ENCODE measurements at regions of chr10 and their contacts with region 1.

Region 1: DNA sequence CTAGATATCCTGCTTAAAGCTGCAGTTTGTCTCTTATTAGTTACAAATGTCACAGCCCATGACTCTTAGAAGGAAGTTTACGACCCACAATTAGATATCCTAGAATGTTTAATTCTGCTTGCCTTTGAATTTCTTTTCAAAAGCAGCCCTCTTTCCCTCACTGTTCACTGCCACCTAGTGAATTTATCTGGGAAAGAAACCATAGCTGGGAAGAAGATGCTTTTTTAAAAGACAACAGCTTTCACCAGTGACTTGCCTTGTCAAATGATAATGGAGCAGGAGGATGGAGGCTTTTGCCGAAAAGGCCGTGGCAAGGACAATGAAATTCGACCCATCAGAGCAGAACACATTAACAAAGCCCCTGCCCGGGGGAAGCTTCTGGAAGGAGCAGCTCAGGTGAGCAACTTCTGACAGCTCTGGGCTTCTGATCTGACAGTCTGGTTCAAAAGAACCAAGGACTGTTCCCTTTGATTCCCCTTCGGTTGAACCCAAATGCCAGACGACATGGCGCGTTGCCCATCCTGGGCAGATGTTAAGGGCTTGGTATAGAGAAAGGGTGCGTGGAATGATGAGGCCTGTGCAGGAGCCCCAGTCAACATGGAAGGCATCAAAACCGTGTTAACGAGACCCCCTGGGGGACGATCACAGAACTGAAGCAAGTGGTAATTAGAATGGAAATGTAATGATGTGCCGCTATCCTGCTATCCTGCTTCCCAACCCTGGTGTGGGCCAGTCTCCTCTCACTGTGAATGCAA is 236.8 kb downstream of the FRMD4A start:
- DNase-seq: no peak
- ATAC-seq: no peak
- H3K4me3 ChIP-seq: no peak overlapping the region
- H3K27ac ChIP-seq: no peak overlapping the region
- H3K4me1 ChIP-seq: no peaks in the 10 kb centered on the region
- H3K27me3 ChIP-seq: no peaks in the 10 kb centered on the region
- CTCF ChIP-seq: peak in 4 of 5 experiments; percentile 24 to 42 (median 32)
- POLR2A ChIP-seq: no peak

Region 2: GRCh38 chr10:13787015-13787421 is 306.9 kb before region 1 on chr10:
- in situ Hi-C with region 1: loop called (anchors 5 to 25 kb)
- intact Hi-C with region 1: loop called (anchors 5 kb)
- DNase-seq: no peak
- ATAC-seq: peak in 1 of 2 donors; percentile 15
- H3K4me3 ChIP-seq: no peak overlapping the region
- H3K27ac ChIP-seq: peak overlapping the region; percentile 21 to 76 (median 39)
- H3K4me1 ChIP-seq: peaks cover 8 to 25% of the 10 kb centered on the region in 2 donors
- H3K27me3 ChIP-seq: no peaks in the 10 kb centered on the region
- CTCF ChIP-seq: no peak
- POLR2A ChIP-seq: no peak